ENCODE measurements at regions of chr1 and their contacts with region 1.

Region 1: DNA sequence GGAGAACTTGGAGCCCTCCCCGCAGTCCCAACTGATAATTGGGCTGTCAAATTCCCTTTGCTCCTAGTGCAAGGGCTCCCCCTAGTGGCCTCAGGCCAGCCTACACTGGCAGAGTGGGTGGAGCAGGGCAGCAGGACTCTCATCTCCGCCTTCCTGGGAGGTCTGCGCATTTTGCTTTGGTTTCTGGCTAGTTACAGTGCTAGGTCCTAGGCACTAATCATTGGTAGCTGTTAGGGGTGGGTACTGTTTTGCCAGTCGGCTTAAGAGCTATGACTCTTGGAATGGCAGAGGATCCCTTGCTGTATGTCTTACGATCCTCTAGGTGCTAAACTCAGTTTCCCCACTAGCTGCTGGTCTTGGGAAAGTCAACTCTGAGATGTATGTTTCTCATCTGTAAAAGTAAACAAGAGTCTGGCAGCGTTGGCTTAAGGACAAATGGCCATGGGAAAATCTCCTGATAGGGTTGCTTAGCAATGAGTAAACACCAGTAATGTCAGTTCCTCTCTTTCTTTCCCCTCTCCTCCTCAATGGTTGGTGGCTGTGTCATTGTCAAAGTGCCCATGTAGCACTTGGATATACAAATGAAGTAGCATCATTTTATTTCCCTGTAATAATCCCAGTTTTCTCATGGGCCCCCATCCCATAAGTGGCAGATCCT is 2.1 kb upstream of the FYB2 start:
- DNase-seq: peak; percentile 82 to 86
- H3K4me3 ChIP-seq: no peak overlapping the region
- H3K4me3 Mint-ChIP-seq: no peak overlapping the region
- H3K27ac Mint-ChIP-seq: no peak overlapping the region
- H3K4me1 ChIP-seq: peaks cover 39% of the 10 kb centered on the region
- H3K4me1 Mint-ChIP-seq: peaks cover 24% of the 10 kb centered on the region
- H3K27me3 ChIP-seq: no peaks in the 10 kb centered on the region
- H3K27me3 Mint-ChIP-seq: no peaks in the 10 kb centered on the region
- CTCF ChIP-seq: peak; percentile 73 to 78

Region 2: DNA sequence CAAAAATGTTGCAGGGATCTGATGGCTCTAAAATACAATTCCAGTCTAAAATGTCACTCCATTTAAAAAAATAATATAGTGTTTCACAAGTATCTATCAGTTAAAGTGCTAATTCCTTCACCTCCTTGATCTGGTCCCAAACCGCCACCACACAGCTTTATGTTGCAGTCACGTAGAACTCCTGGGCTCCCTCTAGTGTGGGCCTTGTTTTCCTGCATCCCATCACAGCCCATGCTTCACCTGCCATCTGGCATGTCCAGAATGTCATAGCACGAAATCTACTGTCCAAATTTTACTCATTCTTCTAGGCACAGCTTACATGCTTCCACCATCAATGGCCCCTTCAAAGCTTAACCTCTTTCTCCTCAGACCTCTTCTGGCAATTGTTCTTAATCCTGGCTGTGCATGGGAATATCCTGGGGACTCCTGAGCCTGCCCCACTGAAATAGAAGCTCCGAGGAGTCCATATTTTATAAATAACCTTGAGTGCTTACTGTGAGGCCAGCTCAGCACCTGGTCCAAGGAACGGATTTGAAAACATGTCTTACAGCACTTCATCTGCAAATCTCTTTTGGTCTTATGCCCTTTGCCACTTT is 17.6 kb before region 1 on chr1:
- CTCF ChIA-PET with region 1: interaction called, 5 read pairs
- POLR2A ChIA-PET with region 1: no interaction called
- intact Hi-C with region 1: loop called (anchors 2 kb)
- DNase-seq: peak; percentile 59 to 62
- H3K4me3 ChIP-seq: no peak overlapping the region
- H3K4me3 Mint-ChIP-seq: no peak overlapping the region
- H3K27ac Mint-ChIP-seq: no peak overlapping the region
- H3K4me1 ChIP-seq: no peaks in the 10 kb centered on the region; the same call in 1 of the 2 replicates
- H3K4me1 Mint-ChIP-seq: no peaks in the 10 kb centered on the region
- H3K27me3 ChIP-seq: no peaks in the 10 kb centered on the region
- H3K27me3 Mint-ChIP-seq: no peaks in the 10 kb centered on the region
- CTCF ChIP-seq: peak; percentile 52 to 67

Region 3: DNA sequence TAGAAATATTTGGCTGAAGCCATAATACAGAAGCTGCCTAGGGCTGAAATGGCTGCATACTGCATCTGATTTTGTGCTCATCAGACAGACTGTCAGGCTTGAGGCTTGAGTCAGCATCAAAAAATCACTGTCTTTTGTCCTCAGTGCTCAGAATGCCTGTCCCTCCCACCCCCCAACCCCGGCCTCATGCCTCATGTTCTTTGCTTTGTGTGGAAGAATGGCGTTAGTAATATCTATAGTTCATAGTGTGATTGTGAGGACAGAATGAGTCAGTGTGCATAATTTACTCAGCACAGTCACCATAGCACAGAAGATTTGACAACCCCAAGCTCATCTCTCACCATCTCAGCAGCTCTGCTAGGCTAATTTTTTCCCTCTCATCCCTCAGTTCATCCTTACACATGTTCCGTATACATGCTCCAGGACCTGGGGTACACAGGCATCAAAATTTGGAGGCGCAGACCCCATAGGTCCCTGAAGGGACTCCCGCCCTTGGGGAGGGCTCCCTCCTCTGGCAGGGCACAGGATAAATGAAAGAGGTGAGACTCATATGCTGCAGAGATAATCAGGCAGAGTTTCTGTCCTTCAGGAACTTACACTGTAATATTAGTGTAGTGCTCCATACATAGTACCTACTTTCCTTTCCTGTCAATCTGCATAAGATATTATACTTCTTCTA is 303.6 kb after region 1 on chr1:
- CTCF ChIA-PET with region 1: no interaction called
- POLR2A ChIA-PET with region 1: no interaction called
- intact Hi-C with region 1: no loop called
- DNase-seq: no peak
- H3K4me3 ChIP-seq: no peak overlapping the region
- H3K4me3 Mint-ChIP-seq: no peak overlapping the region
- H3K27ac Mint-ChIP-seq: peak overlapping the region; percentile 48
- H3K4me1 ChIP-seq: no peaks in the 10 kb centered on the region
- H3K4me1 Mint-ChIP-seq: no peaks in the 10 kb centered on the region
- H3K27me3 ChIP-seq: no peaks in the 10 kb centered on the region
- H3K27me3 Mint-ChIP-seq: no peaks in the 10 kb centered on the region
- CTCF ChIP-seq: no peak

Measured in Caco-2 (cell line).